Activated B cell treated with CpG ODN at 0.5 μM for 24 hours (primary cell): ENCODE measurements at regions of chr2 and their contacts with region 1.

Region 1: GRCh38 chr2:160353166-160353565 is 140.4 kb downstream of the RBMS1 start:
- DNase-seq: no peak
- ATAC-seq: peak; percentile 70
- H3K4me3 Mint-ChIP-seq: no peak overlapping the region
- H3K27ac Mint-ChIP-seq: no peak overlapping the region
- H3K4me1 Mint-ChIP-seq: peaks cover 10% of the 10 kb centered on the region
- H3K27me3 Mint-ChIP-seq: no peaks in the 10 kb centered on the region
- CTCF ChIP-seq: no peak

Region 2: GRCh38 chr2:160306985-160307384 is 46.2 kb before region 1 on chr2:
- CTCF ChIA-PET with region 1: no interaction called
- POLR2A ChIA-PET with region 1: no interaction called
- intact Hi-C with region 1: no loop called
- DNase-seq: no peak
- ATAC-seq: no peak
- H3K4me3 Mint-ChIP-seq: no peak overlapping the region
- H3K27ac Mint-ChIP-seq: no peak overlapping the region
- H3K4me1 Mint-ChIP-seq: no peaks in the 10 kb centered on the region
- H3K27me3 Mint-ChIP-seq: no peaks in the 10 kb centered on the region
- CTCF ChIP-seq: no peak

Region 3: GRCh38 chr2:160324161-160324800 is 28.9 kb before region 1 on chr2:
- CTCF ChIA-PET with region 1: interaction called, 14 read pairs
- POLR2A ChIA-PET with region 1: no interaction called
- intact Hi-C with region 1: no loop called
- DNase-seq: peak; percentile 20
- ATAC-seq: peak; percentile 47
- H3K4me3 Mint-ChIP-seq: no peak overlapping the region
- H3K27ac Mint-ChIP-seq: no peak overlapping the region
- H3K4me1 Mint-ChIP-seq: peaks cover 46% of the 10 kb centered on the region
- H3K27me3 Mint-ChIP-seq: no peaks in the 10 kb centered on the region
- CTCF ChIP-seq: no peak

Region 4: GRCh38 chr2:160429248-160430000 is 76.3 kb after region 1 on chr2:
- CTCF ChIA-PET with region 1: interaction called, 11 read pairs
- POLR2A ChIA-PET with region 1: no interaction called
- intact Hi-C with region 1: no loop called
- DNase-seq: no peak
- ATAC-seq: peak; percentile 46
- H3K4me3 Mint-ChIP-seq: no peak overlapping the region
- H3K27ac Mint-ChIP-seq: peak overlapping the region; percentile 54
- H3K4me1 Mint-ChIP-seq: peaks cover 34% of the 10 kb centered on the region
- H3K27me3 Mint-ChIP-seq: no peaks in the 10 kb centered on the region
- CTCF ChIP-seq: peak; percentile 65

Region 5: GRCh38 chr2:160918906-160919503 is 565.8 kb after region 1 on chr2:
- CTCF ChIA-PET with region 1: interaction called, 3 read pairs
- POLR2A ChIA-PET with region 1: no interaction called
- intact Hi-C with region 1: loop called (anchors 1 kb)
- DNase-seq: no peak
- ATAC-seq: no peak
- H3K4me3 Mint-ChIP-seq: no peak overlapping the region
- H3K27ac Mint-ChIP-seq: no peak overlapping the region
- H3K4me1 Mint-ChIP-seq: no peaks in the 10 kb centered on the region
- H3K27me3 Mint-ChIP-seq: peaks cover 8% of the 10 kb centered on the region
- CTCF ChIP-seq: no peak

Region 6: GRCh38 chr2:160994141-160995002 is 641.2 kb after region 1 on chr2:
- CTCF ChIA-PET with region 1: interaction called, 34 read pairs
- POLR2A ChIA-PET with region 1: no interaction called
- intact Hi-C with region 1: loop called (anchors 1 kb)
- DNase-seq: no peak
- ATAC-seq: peak; percentile 37
- H3K4me3 Mint-ChIP-seq: no peak overlapping the region
- H3K27ac Mint-ChIP-seq: no peak overlapping the region
- H3K4me1 Mint-ChIP-seq: peaks cover 3% of the 10 kb centered on the region
- H3K27me3 Mint-ChIP-seq: no peaks in the 10 kb centered on the region
- CTCF ChIP-seq: peak; percentile 38